Dorsolateral prefrontal cortex (tissue), 120 donors: ENCODE measurements at regions of chr1 and their contacts with region 1.

Region 1: GRCh38 chr1:205528887-205529825 is 24.7 kb downstream of the CDK18 start:
- DNase-seq: peak; percentile 67 to 96 (median 88)
- H3K4me3 ChIP-seq: peak overlapping the region; percentile 17 to 62 (median 47)
- H3K27ac ChIP-seq: peak overlapping the region in 51 of 59 donors; percentile 3 to 91 (median 70)
- H3K27me3 ChIP-seq: no peaks in the 10 kb centered on the region
- CTCF ChIP-seq: peak; percentile 78 to 99 (median 96)

Region 2: DNA sequence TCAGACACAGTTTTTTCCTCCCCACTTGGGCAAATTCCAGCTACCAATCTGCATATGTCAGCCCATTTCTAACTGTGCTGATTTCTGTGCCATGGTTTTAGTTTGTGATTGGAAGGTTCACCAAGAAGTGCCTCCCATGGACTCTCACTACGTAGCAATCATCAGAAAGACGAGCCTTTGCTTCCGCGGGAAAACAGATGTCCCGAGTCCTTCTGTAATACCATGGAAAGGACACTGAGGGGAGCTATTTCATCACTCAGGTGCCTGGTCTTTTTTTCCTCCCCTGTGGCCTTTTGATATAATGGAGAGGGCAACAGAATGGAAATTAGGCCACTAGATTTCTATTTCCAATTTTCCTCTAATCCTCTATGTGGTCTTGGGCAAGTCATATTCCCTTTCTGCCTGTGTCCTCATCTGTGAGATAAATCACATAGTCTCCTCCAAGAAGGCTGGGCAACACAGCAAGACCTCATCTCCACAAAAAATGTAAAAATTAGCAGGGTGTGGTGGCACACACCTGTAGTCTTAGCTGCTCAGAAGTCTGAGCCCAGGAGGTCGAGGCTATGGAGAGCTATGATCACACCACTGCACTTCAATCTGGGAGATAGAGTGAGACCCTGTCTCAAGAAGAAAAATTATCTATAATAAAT is 132.1 kb before region 1 on chr1:
- intact Hi-C with region 1: loop called (anchors 2 to 5 kb)
- DNase-seq: peak in 2 of 10 donors; percentile 40 to 71
- H3K4me3 ChIP-seq: no peak overlapping the region
- H3K27ac ChIP-seq: no peak overlapping the region
- H3K27me3 ChIP-seq: no peaks in the 10 kb centered on the region
- CTCF ChIP-seq: peak; percentile 51 to 81 (median 73)

Region 3: GRCh38 chr1:205554026-205554811 is 25.1 kb after region 1 on chr1:
- intact Hi-C with region 1: no loop called
- DNase-seq: no peak
- H3K4me3 ChIP-seq: no peak overlapping the region
- H3K27ac ChIP-seq: peak overlapping the region in 1 of 59 donors; percentile 68
- H3K27me3 ChIP-seq: no peaks in the 10 kb centered on the region
- CTCF ChIP-seq: no peak

Region 4: DNA sequence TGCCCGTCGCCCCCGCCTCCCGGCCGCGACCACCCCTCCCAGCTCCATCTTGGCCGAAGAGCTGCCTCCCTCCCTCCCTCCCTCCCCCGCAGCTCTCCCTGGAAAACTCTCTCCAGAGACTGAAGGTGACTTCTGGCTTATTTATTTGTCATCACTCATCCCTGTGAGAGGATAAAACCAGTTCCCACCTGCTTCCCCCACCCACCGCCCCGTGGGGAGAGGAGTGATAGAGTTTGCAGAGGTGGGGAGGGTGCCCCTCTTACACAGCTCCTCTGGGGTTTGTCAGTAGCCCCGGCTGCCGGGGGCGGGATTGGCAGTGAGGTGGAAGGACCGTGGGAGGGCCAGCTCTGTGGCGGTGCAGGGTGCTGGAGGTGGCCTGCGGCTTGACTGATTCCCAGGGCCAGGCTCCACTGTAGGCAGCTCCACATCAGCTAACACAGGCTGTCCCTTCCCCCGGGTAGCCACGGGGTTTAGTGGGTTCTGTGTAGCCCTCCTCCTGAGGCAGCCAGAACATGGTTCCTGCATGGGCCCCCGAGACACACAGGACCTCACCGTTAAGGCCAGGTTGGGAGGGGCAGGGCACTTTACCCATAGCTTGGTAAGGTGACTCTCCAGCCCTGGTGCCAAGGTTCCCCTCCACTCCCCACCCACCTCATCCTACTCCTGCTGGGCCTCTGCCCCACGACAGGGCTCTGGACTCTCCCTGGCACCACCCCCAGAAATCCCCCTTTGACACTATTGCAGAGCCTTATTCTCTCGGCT is 40.4 kb after region 1 on chr1:
- intact Hi-C with region 1: loop called in 1 of 2 experiments (anchors 5 kb)
- DNase-seq: peak in 6 of 10 donors; percentile 27 to 82 (median 56)
- H3K4me3 ChIP-seq: peak overlapping the region; percentile 26 to 76 (median 58)
- H3K27ac ChIP-seq: peak overlapping the region in 47 of 59 donors; percentile 11 to 90 (median 69)
- H3K27me3 ChIP-seq: peaks cover 0 to 13% (median 0%) of the 10 kb centered on the region in 45 donors
- CTCF ChIP-seq: peak in 1 of 56 donors; percentile 1

Region 5: DNA sequence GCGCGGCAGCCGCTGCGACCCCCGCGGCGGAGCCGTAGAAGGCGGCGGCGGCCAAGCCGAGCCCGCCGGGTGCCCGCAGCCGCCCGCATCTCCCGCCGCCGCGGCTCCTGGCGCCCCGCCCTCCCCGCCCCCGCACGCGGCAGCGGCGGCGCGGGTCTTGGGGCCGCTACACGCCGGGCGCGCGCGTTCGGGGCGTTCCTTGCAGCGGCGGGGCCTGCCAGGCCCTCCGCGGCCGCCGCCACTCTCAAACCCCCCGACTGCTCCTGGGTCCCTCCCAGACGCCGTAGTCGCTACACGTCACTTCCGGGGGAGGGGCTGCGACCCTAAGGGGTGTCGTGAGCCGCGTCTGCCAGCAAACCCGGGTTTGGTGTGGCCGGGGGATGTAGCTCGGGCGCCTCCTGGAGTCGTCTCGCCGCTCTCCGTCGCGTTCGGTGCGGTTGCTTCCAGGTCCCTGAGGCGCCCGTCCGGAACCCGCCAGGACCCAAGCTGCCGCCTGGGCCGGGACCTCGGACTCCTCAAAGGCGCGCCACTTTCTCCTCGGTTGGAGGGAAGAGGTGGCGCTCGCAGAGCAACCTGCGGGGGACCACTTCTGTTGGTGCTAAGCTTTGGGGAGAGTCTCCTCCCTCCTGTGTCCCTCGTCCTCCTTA is 102.7 kb after region 1 on chr1 and contains the start of gene ELK4:
- intact Hi-C with region 1: loop called (anchors 2 to 5 kb)
- DNase-seq: peak; percentile 95 to 98 (median 97)
- H3K4me3 ChIP-seq: peak within 1 kb of the TSS; percentile 50 to 93 (median 79)
- H3K27ac ChIP-seq: peak within 1 kb of the TSS; percentile 70 to 99 (median 92)
- H3K27me3 ChIP-seq: no peaks in the 10 kb centered on the region
- CTCF ChIP-seq: peak; percentile 42 to 90 (median 82)
- total RNA-seq, gene ELK4: 27.6 to 72.4 (median 41.6) TPM

Region 6: DNA sequence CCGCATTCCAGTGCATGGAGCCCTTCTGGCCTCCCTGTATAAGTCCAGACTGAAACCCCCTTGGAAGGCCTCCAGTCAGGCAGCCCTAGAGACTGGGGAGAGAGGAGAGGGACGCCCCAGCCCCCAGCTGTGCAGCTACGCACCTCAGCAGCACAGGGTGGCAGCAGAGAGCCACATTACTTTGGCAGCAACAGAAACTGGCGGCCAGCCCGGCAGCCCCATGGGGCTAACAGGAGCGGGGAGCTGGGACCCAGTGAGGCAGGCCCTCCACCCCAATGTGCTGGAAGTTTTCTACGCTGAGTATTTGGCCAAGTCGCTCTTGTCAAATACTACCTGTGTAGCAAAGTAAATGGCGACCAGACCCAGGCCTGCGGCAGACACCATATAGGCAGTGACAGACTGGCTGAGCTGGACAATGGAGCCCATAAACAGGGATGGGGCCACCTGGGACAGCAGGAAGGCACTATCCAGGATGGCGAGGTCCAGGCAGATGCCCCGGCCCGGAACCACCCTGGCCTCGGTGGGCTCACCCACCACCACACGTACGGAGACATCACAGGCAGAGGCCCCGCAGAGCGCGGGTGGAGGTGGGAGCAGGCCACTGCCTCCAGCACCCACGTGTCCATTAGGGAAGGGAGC is 129.9 kb after region 1 on chr1:
- intact Hi-C with region 1: loop called in 1 of 2 experiments (anchors 2 kb)
- DNase-seq: peak; percentile 84 to 91 (median 87)
- H3K4me3 ChIP-seq: peak overlapping the region in 6 of 59 donors; percentile 0 to 25 (median 17)
- H3K27ac ChIP-seq: peak overlapping the region in 54 of 59 donors; percentile 5 to 100 (median 67)
- H3K27me3 ChIP-seq: no peaks in the 10 kb centered on the region
- CTCF ChIP-seq: peak; percentile 56 to 99 (median 95)

Region 7: DNA sequence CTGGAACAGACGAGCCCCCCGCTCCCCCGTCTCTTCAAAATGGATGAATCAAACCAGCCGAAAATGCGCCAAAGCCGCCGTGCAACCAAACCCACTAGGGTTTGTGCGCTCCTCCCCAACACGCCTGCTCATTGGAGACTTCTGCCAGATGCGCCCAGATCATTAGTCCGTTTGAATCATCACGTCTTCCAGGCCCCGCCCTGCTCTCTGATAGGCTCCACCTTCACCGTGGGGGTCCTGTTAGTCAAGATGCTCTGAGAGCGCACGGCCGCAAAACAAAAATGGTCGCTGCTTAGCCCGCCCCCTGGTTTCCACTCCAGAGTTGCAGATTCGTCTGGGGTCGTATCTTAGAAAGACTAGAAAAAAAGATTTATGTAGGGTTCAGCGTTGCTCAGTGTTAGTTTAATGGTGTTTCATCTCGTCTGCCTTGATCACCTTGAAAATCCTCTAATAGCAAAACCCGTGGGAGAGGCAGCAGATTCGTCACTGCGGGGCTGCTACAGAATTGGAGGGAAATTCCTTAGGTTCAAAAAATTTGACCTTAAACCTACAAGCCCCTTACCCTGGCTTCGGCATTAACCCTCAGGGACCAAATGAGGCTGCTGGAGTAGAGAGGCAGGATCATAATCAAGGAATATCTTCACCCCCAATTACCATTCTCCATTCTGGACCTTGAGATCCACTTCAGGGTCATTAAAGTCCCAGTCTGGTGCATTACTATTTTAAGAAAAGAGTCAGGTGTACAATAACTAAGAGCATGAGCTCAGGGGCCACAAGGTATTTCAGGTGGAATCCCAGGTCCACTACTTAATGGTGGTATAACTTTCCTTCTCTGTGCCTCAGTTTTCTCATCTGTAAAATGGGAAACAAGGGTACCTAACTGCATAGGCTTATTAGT is 221.2 kb after region 1 on chr1 and contains the start of gene NUCKS1:
- intact Hi-C with region 1: no loop called
- DNase-seq: peak; percentile 93 to 100 (median 98)
- H3K4me3 ChIP-seq: peak within 1 kb of the TSS; percentile 54 to 98 (median 85)
- H3K27ac ChIP-seq: peak within 1 kb of the TSS; percentile 72 to 99 (median 97)
- H3K27me3 ChIP-seq: no peaks in the 10 kb centered on the region
- CTCF ChIP-seq: peak in 55 of 56 donors; percentile 32 to 79 (median 61)
- total RNA-seq, gene NUCKS1: 124 to 316 (median 225) TPM